Activated T-helper 1 cell treated with anti-CD3 and anti-CD28 coated beads, Interleukin-12 subunit alpha, Interleukin-12 subunit beta, Interleukin-2, Interleukin-4 antibody, amounts not matched to agents 30 ng/mL and 10 ng/mL and 1 ng/mL, durations not matched to agents 14 hours and 24 hours and 36 hours (primary cell): ENCODE measurements at regions of chr13 and their contacts with region 1.

Region 1: DNA sequence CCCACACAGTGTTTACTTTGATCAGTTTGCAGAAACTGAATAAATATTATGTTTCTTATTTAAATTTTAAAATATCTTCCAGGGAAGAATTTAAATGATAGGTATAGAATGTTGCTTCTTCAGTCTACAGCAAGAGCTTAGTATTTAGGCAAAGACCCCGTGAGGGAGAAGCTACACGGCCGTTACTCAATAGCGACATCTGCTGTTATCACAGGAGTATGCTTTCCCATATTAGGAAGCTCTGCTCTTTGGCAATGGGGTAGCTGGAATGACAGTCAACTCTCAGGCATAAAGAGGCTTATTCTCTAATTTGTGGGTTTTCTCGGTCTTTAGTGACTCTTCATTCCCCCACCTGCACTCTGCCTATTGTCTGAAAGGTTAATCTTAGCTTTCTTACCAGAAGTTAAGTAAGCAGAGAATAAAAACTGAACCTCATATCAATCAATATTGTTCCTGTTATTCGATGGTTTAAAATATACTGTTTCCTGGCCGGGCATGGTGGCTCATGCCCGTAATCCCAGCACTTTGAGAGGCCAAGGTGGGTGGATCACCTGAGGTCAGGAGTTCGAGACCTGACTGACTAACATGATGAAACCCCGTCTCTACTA is 13.2 kb upstream of the LHFPL6 start:
- DNase-seq: peak; percentile 17
- H3K4me3 Mint-ChIP-seq: no peak overlapping the region
- H3K27ac Mint-ChIP-seq: no peak overlapping the region
- H3K4me1 Mint-ChIP-seq: no peaks in the 10 kb centered on the region
- H3K27me3 Mint-ChIP-seq: peaks cover 13% of the 10 kb centered on the region

Region 2: GRCh38 chr13:39051157-39051556 is 565.0 kb before region 1 on chr13:
- intact Hi-C with region 1: loop called (anchors 1 kb)
- DNase-seq: no peak
- H3K4me3 Mint-ChIP-seq: no peak overlapping the region
- H3K27ac Mint-ChIP-seq: no peak overlapping the region
- H3K4me1 Mint-ChIP-seq: peaks cover 6% of the 10 kb centered on the region
- H3K27me3 Mint-ChIP-seq: no peaks in the 10 kb centered on the region

Region 3: GRCh38 chr13:39144941-39145533 is 471.2 kb before region 1 on chr13:
- intact Hi-C with region 1: loop called (anchors 2 kb)
- DNase-seq: peak; percentile 3
- H3K4me3 Mint-ChIP-seq: no peak overlapping the region
- H3K27ac Mint-ChIP-seq: no peak overlapping the region
- H3K4me1 Mint-ChIP-seq: peaks cover 18% of the 10 kb centered on the region
- H3K27me3 Mint-ChIP-seq: peaks cover 16% of the 10 kb centered on the region

Region 4: GRCh38 chr13:39263033-39263432 is 353.2 kb before region 1 on chr13:
- intact Hi-C with region 1: loop called (anchors 1 kb)
- DNase-seq: peak; percentile 14
- H3K4me3 Mint-ChIP-seq: no peak overlapping the region
- H3K27ac Mint-ChIP-seq: no peak overlapping the region
- H3K4me1 Mint-ChIP-seq: peaks cover 9% of the 10 kb centered on the region
- H3K27me3 Mint-ChIP-seq: peaks cover 6% of the 10 kb centered on the region

Region 5: GRCh38 chr13:39415008-39415802 is 201.0 kb before region 1 on chr13:
- intact Hi-C with region 1: loop called (anchors 5 kb)
- DNase-seq: no peak
- H3K4me3 Mint-ChIP-seq: no peak overlapping the region
- H3K27ac Mint-ChIP-seq: no peak overlapping the region
- H3K4me1 Mint-ChIP-seq: no peaks in the 10 kb centered on the region
- H3K27me3 Mint-ChIP-seq: peaks cover 9% of the 10 kb centered on the region

Region 6: GRCh38 chr13:39676315-39676876 is 60.2 kb after region 1 on chr13:
- intact Hi-C with region 1: loop called (anchors 2 kb)
- DNase-seq: no peak
- H3K4me3 Mint-ChIP-seq: no peak overlapping the region
- H3K27ac Mint-ChIP-seq: no peak overlapping the region
- H3K4me1 Mint-ChIP-seq: no peaks in the 10 kb centered on the region
- H3K27me3 Mint-ChIP-seq: no peaks in the 10 kb centered on the region

Region 7: DNA sequence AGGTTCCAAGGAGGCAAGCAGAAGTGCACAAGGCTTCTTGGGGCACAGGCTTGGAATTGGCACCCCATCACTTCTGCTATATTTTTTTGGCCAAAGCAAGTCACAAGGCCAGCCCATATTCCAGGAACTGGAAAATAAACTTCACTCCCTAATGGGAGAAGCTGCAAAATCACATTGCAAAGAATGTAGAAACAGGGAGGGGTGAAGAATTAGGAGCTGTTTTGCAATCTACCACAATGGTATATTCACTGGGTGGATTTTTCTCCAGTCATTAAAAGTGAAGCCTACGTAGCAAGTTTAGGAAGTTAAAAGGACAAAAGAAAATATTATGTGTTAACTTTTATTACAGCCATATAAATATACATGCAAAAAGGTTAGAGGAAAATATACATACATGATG is 504.1 kb after region 1 on chr13:
- intact Hi-C with region 1: no loop called
- DNase-seq: no peak
- H3K4me3 Mint-ChIP-seq: no peak overlapping the region
- H3K27ac Mint-ChIP-seq: no peak overlapping the region
- H3K4me1 Mint-ChIP-seq: peaks cover 51% of the 10 kb centered on the region
- H3K27me3 Mint-ChIP-seq: no peaks in the 10 kb centered on the region

Region 8: GRCh38 chr13:40682449-40683240 is 1066.5 kb after region 1 on chr13:
- intact Hi-C with region 1: loop called (anchors 10 kb)
- DNase-seq: no peak
- H3K4me3 Mint-ChIP-seq: no peak overlapping the region
- H3K27ac Mint-ChIP-seq: peak overlapping the region; percentile 46
- H3K4me1 Mint-ChIP-seq: peaks cover 15% of the 10 kb centered on the region
- H3K27me3 Mint-ChIP-seq: peaks cover 2% of the 10 kb centered on the region